Right ventricle myocardium inferior (tissue), 1 donor: ENCODE measurements at regions of chr4 and their contacts with region 1.

Region 1: GRCh38 chr4:123986268-123986798 is 589.7 kb downstream of the SPRY1 start:
- DNase-seq: peak; percentile 63
- ATAC-seq: peak; percentile 89

Region 2: DNA sequence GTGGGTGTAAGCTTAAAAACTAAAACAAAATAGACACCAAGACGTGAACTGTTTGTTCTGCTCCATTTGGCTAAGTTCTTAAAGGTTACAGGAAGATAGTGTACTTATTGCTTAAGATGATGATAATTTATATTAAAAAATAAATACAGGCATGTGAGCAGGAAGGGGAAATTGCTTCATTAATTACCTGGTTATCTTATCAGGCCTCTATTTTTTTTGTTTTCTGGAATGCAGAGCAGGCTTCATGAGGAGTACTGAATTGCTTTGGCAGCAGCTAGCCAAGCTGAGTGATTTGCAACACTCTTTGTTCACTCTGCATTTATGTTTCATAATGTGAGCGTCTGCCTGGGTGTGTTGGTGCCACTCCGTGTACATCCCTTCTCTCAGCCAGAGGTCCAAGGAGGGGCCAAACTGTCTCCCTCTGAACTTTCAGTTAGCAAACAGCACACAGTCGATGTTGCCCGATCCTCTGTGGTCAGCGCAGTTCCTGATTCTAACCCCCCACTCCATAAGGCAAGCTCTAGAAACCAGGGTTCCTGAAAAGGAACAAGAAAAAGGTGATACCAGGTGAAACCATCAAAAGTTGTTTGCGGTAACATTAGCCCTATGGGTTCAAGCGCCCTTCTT is 241.6 kb before region 1 on chr4:
- intact Hi-C with region 1: loop called (anchors 10 kb)
- DNase-seq: no peak
- ATAC-seq: peak; percentile 75

Region 3: GRCh38 chr4:124035364-124036041 is 49.2 kb after region 1 on chr4:
- intact Hi-C with region 1: loop called (anchors 1 kb)
- DNase-seq: no peak
- ATAC-seq: no peak